Heart left ventricle (tissue), 16 donors: ENCODE measurements at regions of chr1 and their contacts with region 1.

Region 1: GRCh38 chr1:87916965-87917364 is 588.3 kb downstream of the LMO4 start:
- DNase-seq: no peak
- ATAC-seq: no peak
- H3K4me3 ChIP-seq: no peak overlapping the region
- H3K27ac ChIP-seq: no peak overlapping the region
- H3K4me1 ChIP-seq: no peaks in the 10 kb centered on the region
- H3K27me3 ChIP-seq: no peaks in the 10 kb centered on the region
- CTCF ChIP-seq: no peak
- POLR2A ChIP-seq: no peak

Region 2: GRCh38 chr1:87202922-87203655 is 713.9 kb before region 1 on chr1:
- intact Hi-C with region 1: no loop called
- DNase-seq: no peak
- ATAC-seq: no peak
- H3K4me3 ChIP-seq: peak overlapping the region in 2 of 12 donors; percentile 12 to 21
- H3K27ac ChIP-seq: no peak overlapping the region
- H3K4me1 ChIP-seq: no peaks in the 10 kb centered on the region
- H3K27me3 ChIP-seq: peaks cover 0 to 8% (median 0%) of the 10 kb centered on the region in 9 donors
- CTCF ChIP-seq: no peak
- POLR2A ChIP-seq: no peak

Region 3: GRCh38 chr1:87787551-87787950 is 129.4 kb before region 1 on chr1:
- intact Hi-C with region 1: no loop called
- DNase-seq: no peak
- ATAC-seq: no peak
- H3K4me3 ChIP-seq: no peak overlapping the region
- H3K27ac ChIP-seq: no peak overlapping the region
- H3K4me1 ChIP-seq: no peaks in the 10 kb centered on the region
- H3K27me3 ChIP-seq: no peaks in the 10 kb centered on the region
- CTCF ChIP-seq: no peak
- POLR2A ChIP-seq: no peak

Region 4: DNA sequence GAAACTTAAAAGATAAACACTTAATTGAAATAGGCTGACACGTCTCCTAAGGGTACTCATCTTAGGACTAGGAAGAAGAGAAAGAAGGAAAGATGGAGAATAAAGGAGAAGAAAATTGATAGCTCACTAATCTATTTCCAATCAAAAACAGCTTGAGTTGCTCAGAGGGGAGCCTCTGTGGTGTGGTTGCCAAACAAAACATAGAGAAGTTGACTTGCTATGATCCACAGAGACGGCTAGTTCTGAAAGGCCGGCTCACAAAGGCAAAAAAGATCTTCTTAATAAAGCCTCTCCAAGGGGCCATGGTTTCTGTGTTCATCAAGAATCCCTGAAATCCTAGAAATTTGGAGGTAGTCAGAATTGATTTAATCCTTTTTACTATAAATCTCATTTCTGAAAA is 55.8 kb after region 1 on chr1:
- intact Hi-C with region 1: loop called in 1 of 10 experiments (anchors 10 kb)
- DNase-seq: no peak
- ATAC-seq: no peak
- H3K4me3 ChIP-seq: no peak overlapping the region
- H3K27ac ChIP-seq: no peak overlapping the region
- H3K4me1 ChIP-seq: peaks cover 0 to 17% (median 4%) of the 10 kb centered on the region in 12 donors
- H3K27me3 ChIP-seq: no peaks in the 10 kb centered on the region
- CTCF ChIP-seq: no peak
- POLR2A ChIP-seq: no peak